ENCODE measurements at regions of chr12 and their contacts with region 1.

Region 1: DNA sequence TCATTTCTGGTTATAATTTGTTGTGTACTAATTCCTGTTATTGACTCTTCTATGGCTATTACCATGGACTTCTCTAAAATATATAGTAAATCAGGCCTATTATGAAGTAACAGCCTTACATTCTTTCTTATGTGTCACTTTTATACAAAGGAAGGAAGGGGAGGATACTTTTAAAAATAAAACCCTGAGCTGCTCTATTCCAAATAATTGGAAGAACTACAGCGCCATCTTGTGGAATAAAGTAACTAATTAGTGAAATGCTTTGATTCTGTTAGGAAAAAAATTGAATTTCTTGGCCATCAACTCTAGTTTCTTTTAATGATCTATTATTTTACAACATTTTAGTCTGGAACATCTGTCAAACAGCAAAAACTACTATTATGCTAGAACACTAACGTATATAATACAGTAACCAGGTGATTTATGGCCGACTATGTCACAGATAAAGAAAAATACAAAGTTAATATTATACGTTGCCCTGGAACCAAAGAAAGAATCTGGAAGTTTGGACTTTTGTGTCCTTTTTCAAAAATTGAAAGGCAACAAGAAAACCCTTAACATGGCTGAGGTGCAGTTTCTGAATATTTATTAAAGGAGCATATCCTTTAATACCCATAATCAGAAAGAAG is 55.0 kb upstream of the NELL2 start:
- DNase-seq: no peak
- ATAC-seq: peak in 4 of 8 donors; percentile 35 to 56 (median 52)
- H3K4me3 ChIP-seq: no peak overlapping the region
- H3K27ac ChIP-seq: no peak overlapping the region
- H3K4me1 ChIP-seq: peaks cover 0 to 9% (median 0%) of the 10 kb centered on the region in 9 donors
- H3K27me3 ChIP-seq: no peaks in the 10 kb centered on the region
- CTCF ChIP-seq: peak; percentile 55 to 76 (median 67)

Region 2: GRCh38 chr12:43444940-43445564 is 1486.0 kb before region 1 on chr12:
- intact Hi-C with region 1: loop called in 1 of 10 experiments (anchors 10 kb)
- DNase-seq: peak in 1 of 2 donors; percentile 29
- ATAC-seq: no peak
- H3K4me3 ChIP-seq: no peak overlapping the region
- H3K27ac ChIP-seq: no peak overlapping the region
- H3K4me1 ChIP-seq: no peaks in the 10 kb centered on the region
- H3K27me3 ChIP-seq: peaks cover 0 to 3% (median 0%) of the 10 kb centered on the region in 7 donors
- CTCF ChIP-seq: peak; percentile 19 to 78 (median 68)

Region 3: GRCh38 chr12:43674819-43675594 is 1256.1 kb before region 1 on chr12:
- intact Hi-C with region 1: no loop called
- DNase-seq: no peak
- ATAC-seq: no peak
- H3K4me3 ChIP-seq: no peak overlapping the region
- H3K27ac ChIP-seq: no peak overlapping the region
- H3K4me1 ChIP-seq: no peaks in the 10 kb centered on the region
- H3K27me3 ChIP-seq: peaks cover 0 to 3% (median 0%) of the 10 kb centered on the region in 7 donors
- CTCF ChIP-seq: no peak

Region 4: DNA sequence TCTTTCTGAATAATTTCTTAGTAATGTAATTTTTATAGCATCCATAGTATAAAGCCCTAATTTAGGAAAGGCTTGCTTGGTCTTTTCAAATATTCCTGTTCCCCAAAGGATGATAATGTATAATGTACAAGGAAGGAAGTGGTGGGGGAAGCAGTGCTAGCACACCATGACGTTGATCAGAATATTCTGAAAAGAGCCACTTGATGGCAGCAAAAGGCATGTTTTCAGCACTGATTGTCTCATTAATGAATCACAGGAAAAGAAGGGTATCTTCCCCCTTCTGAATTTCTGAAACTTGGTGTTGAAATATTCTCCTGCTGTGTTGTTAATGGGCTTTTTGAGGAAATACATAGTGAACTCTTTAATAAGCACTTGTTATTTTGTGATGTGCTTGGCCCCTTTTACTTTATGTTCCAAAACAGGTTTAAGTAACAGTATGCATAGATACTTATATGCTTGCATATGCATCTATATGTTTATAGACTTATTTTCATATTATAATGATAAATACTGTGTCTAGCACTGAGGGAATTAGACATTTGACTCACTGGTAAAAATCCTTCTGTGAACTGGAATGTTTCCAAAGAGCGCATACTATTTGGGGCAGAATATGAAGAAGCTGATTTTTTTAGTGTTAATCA is 973.2 kb before region 1 on chr12:
- intact Hi-C with region 1: loop called in 6 of 10 experiments (anchors 2 to 10 kb)
- DNase-seq: peak in 1 of 2 donors; percentile 12
- ATAC-seq: peak in 3 of 8 donors; percentile 73 to 83 (median 73)
- H3K4me3 ChIP-seq: no peak overlapping the region
- H3K27ac ChIP-seq: no peak overlapping the region
- H3K4me1 ChIP-seq: peaks cover 0 to 10% (median 0%) of the 10 kb centered on the region in 9 donors
- H3K27me3 ChIP-seq: no peaks in the 10 kb centered on the region
- CTCF ChIP-seq: peak in 7 of 9 donors; percentile 37 to 68 (median 61)

Region 5: GRCh38 chr12:44015335-44015941 is 915.6 kb before region 1 on chr12:
- intact Hi-C with region 1: loop called (anchors 1 to 10 kb)
- DNase-seq: no peak
- ATAC-seq: peak in 3 of 8 donors; percentile 54 to 61 (median 55)
- H3K4me3 ChIP-seq: no peak overlapping the region
- H3K27ac ChIP-seq: no peak overlapping the region
- H3K4me1 ChIP-seq: peaks cover 0 to 10% (median 0%) of the 10 kb centered on the region in 9 donors
- H3K27me3 ChIP-seq: no peaks in the 10 kb centered on the region
- CTCF ChIP-seq: peak; percentile 29 to 77 (median 65)

Region 6: DNA sequence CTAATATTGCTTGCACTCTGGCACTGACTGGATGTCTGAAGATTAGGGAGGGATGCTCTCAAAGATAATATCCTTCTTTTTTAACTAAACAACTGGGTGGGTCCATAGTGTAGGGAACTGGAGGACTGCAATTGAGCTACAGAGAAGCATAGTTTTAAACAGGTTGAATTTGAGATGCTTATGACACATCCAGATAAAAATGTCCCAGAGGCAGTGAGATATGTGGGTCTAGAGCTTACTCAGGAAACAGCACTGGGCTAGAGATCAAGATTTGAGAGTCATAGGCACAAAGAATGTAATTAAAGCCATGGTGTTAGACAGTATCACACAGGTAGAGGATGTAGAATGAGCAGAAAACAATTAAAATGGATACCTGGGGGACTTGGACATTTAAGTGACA is 253.4 kb before region 1 on chr12:
- intact Hi-C with region 1: no loop called
- DNase-seq: no peak
- ATAC-seq: no peak
- H3K4me3 ChIP-seq: no peak overlapping the region
- H3K27ac ChIP-seq: no peak overlapping the region
- H3K4me1 ChIP-seq: no peaks in the 10 kb centered on the region
- H3K27me3 ChIP-seq: peaks cover 0 to 4% (median 0%) of the 10 kb centered on the region in 7 donors
- CTCF ChIP-seq: no peak

Region 7: GRCh38 chr12:45336331-45337064 is 405.4 kb after region 1 on chr12:
- intact Hi-C with region 1: no loop called
- DNase-seq: no peak
- ATAC-seq: no peak
- H3K4me3 ChIP-seq: no peak overlapping the region
- H3K27ac ChIP-seq: peak overlapping the region in 1 of 10 donors; percentile 1
- H3K4me1 ChIP-seq: peaks cover 3 to 41% (median 31%) of the 10 kb centered on the region in 9 donors
- H3K27me3 ChIP-seq: no peaks in the 10 kb centered on the region
- CTCF ChIP-seq: no peak